ENCODE measurements at regions of chr10 and their contacts with region 1.

Region 1: GRCh38 chr10:25875556-25876165 is 58.4 kb upstream of the MYO3A start:
- DNase-seq: peak; percentile 23
- H3K4me3 Mint-ChIP-seq: no peak overlapping the region
- H3K27ac Mint-ChIP-seq: no peak overlapping the region
- H3K4me1 Mint-ChIP-seq: no peaks in the 10 kb centered on the region
- H3K27me3 Mint-ChIP-seq: no peaks in the 10 kb centered on the region

Region 2: DNA sequence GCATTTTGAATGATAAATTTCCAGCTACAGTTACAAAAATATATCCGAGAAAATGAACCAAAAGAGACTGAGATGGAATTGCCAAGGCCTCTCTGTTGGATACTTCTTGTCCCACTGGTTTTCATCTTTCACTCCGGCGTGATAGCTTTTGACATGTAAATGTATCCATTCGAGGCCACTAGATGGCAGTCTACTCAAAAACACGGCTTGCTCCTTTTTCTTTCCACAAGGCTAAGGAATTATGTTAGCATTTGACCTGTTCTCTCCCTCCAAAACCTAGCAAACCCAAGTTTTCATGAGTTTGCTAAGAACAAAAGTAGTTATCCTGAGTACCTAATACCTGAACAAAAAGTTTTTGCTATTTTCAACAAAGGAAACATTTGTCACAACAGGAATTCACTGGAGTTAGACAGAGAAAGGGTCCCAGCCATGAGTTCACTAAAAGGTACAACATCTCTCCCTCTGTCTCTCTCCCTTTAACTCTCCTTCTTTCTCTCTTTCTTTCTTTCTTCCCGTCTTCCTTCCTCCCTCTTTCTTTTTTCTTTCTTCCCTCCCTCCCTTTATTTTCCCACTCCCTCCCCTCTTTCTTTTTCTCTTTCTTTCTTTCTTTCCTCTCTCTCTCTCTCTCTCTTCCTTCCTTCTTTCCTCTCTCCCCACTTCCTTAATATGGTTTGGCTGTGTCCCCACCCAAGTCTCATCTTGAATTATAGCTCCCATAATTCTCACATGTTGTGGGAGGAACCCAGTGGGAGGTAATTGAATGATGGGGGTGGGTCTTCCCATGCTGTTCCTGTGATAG is 149.5 kb before region 1 on chr10:
- intact Hi-C with region 1: loop called (anchors 1 kb)
- DNase-seq: no peak
- H3K4me3 Mint-ChIP-seq: no peak overlapping the region
- H3K27ac Mint-ChIP-seq: no peak overlapping the region
- H3K4me1 Mint-ChIP-seq: no peaks in the 10 kb centered on the region
- H3K27me3 Mint-ChIP-seq: no peaks in the 10 kb centered on the region

Region 3: DNA sequence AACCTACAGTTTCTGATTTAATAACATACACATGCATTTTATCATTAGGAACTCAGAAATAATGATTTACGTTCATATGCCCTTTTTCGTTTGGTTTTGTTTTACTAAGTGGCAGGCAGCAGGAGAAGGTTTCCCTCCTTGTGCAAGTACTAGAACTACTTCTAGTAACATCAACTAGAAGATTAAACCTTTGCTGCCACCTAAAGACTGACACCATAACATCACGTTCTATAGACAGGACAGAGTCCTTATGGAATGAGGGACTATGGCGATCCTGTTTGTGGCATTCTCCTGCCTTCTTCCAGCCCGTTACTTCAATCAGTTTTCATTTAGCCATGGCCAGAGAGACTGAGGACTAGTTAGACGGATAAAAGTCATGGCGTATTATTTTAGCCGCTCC is 394.1 kb after region 1 on chr10:
- intact Hi-C with region 1: loop called (anchors 1 kb)
- DNase-seq: no peak
- H3K4me3 Mint-ChIP-seq: no peak overlapping the region
- H3K27ac Mint-ChIP-seq: no peak overlapping the region
- H3K4me1 Mint-ChIP-seq: no peaks in the 10 kb centered on the region
- H3K27me3 Mint-ChIP-seq: no peaks in the 10 kb centered on the region

Region 4: DNA sequence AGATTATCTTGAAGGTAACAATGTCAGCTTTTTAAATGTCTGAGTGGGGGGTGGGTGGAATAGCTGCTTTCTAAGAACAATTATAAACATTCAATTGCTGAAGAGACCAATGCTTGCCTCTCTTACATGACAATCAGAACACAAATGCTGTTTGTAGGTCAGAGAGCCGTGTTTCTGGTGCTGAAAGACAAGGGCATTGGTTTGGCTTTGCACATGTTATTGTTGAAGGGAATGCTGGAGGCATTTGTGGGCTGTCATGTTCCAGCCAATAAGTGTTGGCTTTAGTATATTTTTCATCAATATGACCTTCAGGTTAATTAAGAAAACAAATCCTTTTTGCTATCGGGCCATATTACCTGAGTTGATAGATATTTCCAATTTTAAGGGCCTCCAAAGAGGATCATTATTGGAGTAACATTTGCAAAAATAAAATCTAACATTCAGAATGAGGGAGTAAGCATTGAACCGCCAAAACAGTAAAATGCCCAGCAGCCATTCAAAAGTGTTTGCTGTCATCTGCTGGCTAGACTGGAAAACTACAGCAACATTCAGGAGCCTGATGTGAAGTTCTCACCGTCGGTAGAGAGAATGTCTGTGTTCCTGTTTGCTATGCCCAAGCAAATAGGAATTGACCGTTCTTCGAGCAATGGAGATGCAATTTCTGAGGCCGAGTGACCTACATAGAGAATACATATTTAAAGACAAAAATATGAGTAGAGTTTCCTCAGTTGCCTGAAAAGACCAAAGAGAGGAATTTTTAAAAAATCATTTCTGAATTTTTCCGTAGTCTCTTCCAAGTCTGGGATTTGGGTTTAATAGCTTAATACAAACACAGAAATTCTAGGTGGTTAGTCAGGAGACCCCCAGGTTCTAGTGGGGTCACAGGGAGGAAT is 681.3 kb after region 1 on chr10:
- intact Hi-C with region 1: loop called (anchors 2 kb)
- DNase-seq: no peak
- H3K4me3 Mint-ChIP-seq: no peak overlapping the region
- H3K27ac Mint-ChIP-seq: no peak overlapping the region
- H3K4me1 Mint-ChIP-seq: peaks cover 8% of the 10 kb centered on the region
- H3K27me3 Mint-ChIP-seq: no peaks in the 10 kb centered on the region